ENCODE measurements at regions of chr10 and their contacts with region 1.

Region 1: GRCh38 chr10:3467052-3467951 is 294.7 kb upstream of the PITRM1 start:
- DNase-seq: peak; percentile 93

Region 2: GRCh38 chr10:3398825-3399646 is 68.3 kb before region 1 on chr10:
- intact Hi-C with region 1: no loop called
- DNase-seq: peak; percentile 72

Region 3: DNA sequence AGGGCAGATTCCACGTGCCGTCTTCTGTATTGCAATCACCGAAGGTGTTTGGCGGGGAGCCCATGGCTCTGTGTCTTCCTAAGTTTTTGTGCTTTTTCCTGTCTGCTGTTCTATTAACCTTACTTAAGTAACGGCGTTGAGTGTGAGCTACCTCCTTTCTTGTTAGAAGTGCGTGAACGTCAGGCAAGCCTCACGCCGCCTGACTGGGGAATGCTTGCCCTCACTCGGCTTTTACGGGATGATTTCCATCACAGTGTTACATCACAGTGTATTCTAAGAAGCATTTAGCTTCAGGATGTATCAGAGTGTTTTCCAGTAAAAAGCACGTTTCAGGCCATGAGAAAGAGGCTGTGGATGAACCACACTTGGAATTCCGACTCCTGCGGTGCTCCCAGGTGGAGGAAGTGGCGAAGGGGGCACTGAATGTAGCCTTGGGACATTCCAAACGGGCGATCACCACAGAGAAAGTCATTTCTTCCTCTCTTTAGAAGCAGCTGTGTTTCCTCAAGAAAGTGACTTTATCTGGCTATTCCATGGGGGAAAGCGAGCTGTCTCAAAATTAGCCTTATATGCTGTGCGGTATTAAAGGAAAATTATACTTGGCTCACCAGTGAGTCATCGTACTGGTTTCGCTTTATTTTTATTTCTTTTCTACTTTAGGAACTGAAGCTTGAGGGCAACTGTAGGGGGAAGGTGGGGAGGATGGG is 27.0 kb after region 1 on chr10:
- intact Hi-C with region 1: loop called in 1 of 2 experiments (anchors 2 kb)
- DNase-seq: no peak

Region 4: DNA sequence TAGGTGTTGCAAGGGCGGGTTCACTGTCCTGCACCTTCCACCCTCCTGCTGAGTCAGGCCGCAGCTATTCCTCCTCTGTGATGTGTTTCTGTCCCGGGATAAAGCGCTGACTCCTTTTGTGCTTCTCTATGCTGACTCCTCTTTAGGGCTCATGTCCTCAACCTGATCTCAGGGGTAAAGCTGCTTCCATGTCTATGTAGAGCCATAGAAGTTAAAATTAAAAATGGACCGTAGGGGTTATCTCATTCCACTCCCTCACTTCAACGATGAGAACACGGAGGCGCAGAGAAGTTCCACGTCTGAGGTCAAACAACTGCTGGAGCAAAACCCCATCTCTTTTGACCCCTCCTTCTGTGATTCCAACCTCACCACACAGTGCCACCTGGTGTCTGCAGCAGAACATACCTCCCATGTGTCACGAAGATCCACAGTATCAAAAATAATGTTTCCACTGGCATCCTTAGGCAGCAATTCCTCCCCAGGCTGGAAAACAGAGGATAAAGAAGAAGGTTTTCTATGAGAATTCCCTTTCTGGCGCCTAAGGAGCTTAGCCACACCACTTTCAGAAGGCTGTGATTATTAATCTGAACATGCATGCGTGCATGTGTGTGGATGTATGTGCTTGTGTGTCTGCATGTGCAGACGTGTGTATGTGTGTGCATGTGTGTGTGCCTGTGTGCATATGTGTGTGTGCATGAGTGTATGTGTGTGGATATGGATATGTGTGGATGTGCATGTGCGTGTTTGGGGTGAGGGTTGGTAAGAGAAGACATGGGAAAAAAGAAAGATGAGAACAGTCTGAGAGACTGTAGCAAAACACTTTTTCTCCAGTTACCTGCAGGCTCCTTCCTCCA is 1816.2 kb after region 1 on chr10:
- intact Hi-C with region 1: loop called in 1 of 2 experiments (anchors 5 kb)
- DNase-seq: peak; percentile 82